ENCODE measurements at regions of chr4 and their contacts with region 1.

Region 1: DNA sequence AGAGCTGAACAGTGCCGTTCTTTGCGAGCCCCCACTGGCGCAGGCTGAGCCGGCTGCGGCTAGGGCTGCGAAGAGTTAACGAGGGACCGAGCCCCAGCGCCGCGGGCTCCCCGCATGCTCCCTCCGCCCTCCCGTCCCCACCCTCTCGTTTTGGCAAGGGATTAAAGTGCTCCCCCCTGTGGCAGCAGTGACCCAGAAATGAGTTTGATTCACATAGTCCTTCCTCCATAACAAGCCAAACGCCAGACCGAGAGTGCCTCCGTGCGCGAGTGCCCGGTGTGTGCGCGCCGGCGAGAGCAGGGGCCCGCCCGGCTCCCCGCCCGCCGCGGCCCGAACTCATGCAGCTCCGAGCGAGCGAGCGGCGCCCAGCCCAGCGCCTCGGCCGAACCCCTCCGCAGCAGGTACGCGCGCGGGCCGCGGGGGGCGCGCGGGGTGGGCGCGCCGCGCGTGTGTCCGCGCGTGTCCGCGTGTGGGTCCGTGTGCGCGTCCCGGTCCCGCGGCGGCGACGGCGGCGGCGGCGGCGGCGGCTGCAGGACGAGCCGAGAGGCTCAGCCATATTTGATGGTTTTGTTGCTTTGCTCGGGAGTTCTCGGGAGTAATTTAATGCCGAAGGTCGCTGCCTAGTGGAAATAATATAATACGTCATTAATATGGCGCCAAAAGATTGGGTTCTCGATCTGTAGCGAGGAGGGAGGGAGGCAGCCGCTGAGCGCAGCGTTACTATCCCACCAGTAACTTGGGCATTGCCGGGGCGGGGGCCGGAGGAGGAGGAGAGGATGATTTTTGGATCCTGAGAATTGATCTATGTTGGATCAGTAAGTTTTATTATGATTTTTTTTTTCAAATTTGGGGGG is at the start of gene JADE1:
- DNase-seq: no peak
- ATAC-seq: peak; percentile 69
- H3K4me3 ChIP-seq: peak within 1 kb of the TSS; percentile 99
- H3K27ac ChIP-seq: peak within 1 kb of the TSS; percentile 97
- H3K4me1 ChIP-seq: no peaks in the 10 kb centered on the region
- H3K27me3 ChIP-seq: no peaks in the 10 kb centered on the region
- CTCF ChIP-seq: peak; percentile 74 to 95 (median 76)
- EP300 ChIP-seq: no peak
- POLR2A ChIP-seq: peak; percentile 83
- RAD21 ChIP-seq: peak; percentile 80
- polyA plus RNA-seq, gene JADE1: 5.9 to 6.3 TPM

Region 2: GRCh38 chr4:127782274-127783025 is 1027.3 kb before region 1 on chr4 and contains the start of gene HSPA4L:
- CTCF ChIA-PET with region 1: no interaction called
- POLR2A ChIA-PET with region 1: no interaction called
- RAD21 ChIA-PET with region 1: no interaction called
- SMC1A ChIA-PET with region 1: no interaction called
- in situ Hi-C with region 1: no loop called
- intact Hi-C with region 1: loop called (anchors 2 kb)
- DNase-seq: peak; percentile 49
- ATAC-seq: peak; percentile 54
- H3K4me3 ChIP-seq: peak within 1 kb of the TSS; percentile 96
- H3K27ac ChIP-seq: peak within 1 kb of the TSS; percentile 90
- H3K4me1 ChIP-seq: peaks cover 11% of the 10 kb centered on the region
- H3K27me3 ChIP-seq: no peaks in the 10 kb centered on the region
- CTCF ChIP-seq: peak in 2 of 3 experiments; percentile 14 to 24; a peak in 2 of 6 replicates
- EP300 ChIP-seq: peak in 1 of 2 experiments; percentile 39; a peak in 1 of 4 replicates
- POLR2A ChIP-seq: peak; percentile 80
- RAD21 ChIP-seq: peak; percentile 3; the same call in 1 of the 2 replicates
- polyA plus RNA-seq, gene HSPA4L: 8.6 to 12.8 TPM

Region 3: GRCh38 chr4:128287871-128288688 is 521.6 kb before region 1 on chr4:
- CTCF ChIA-PET with region 1: interaction called, 4 read pairs
- POLR2A ChIA-PET with region 1: no interaction called
- RAD21 ChIA-PET with region 1: interaction called, 3 read pairs
- SMC1A ChIA-PET with region 1: no interaction called
- in situ Hi-C with region 1: loop called (anchors 10 kb)
- intact Hi-C with region 1: loop called (anchors 5 kb)
- DNase-seq: peak; percentile 97
- ATAC-seq: peak; percentile 86
- H3K4me3 ChIP-seq: peak overlapping the region; percentile 81
- H3K27ac ChIP-seq: peak overlapping the region; percentile 87
- H3K4me1 ChIP-seq: no peaks in the 10 kb centered on the region
- H3K27me3 ChIP-seq: no peaks in the 10 kb centered on the region
- CTCF ChIP-seq: peak in 1 of 3 experiments; percentile 2; a peak in 1 of 6 replicates
- EP300 ChIP-seq: 0 out of 4 replicates have a peak, but pooled peaks of 1 of the 2 experiments have one; percentile 52
- POLR2A ChIP-seq: peak; percentile 93
- RAD21 ChIP-seq: no peak

Region 4: GRCh38 chr4:128574706-128575105 is 235.0 kb before region 1 on chr4:
- CTCF ChIA-PET with region 1: interaction called, 9 read pairs
- POLR2A ChIA-PET with region 1: no interaction called
- RAD21 ChIA-PET with region 1: interaction called, 10 read pairs
- SMC1A ChIA-PET with region 1: interaction called, 7 read pairs
- in situ Hi-C with region 1: loop called (anchors 5 kb)
- intact Hi-C with region 1: loop called (anchors 1 kb)
- DNase-seq: peak; percentile 25
- ATAC-seq: peak; percentile 99
- H3K4me3 ChIP-seq: no peak overlapping the region
- H3K27ac ChIP-seq: no peak overlapping the region
- H3K4me1 ChIP-seq: no peaks in the 10 kb centered on the region
- H3K27me3 ChIP-seq: no peaks in the 10 kb centered on the region
- CTCF ChIP-seq: peak; percentile 66 to 69 (median 68)
- EP300 ChIP-seq: no peak
- POLR2A ChIP-seq: no peak
- RAD21 ChIP-seq: peak; percentile 79

Region 5: DNA sequence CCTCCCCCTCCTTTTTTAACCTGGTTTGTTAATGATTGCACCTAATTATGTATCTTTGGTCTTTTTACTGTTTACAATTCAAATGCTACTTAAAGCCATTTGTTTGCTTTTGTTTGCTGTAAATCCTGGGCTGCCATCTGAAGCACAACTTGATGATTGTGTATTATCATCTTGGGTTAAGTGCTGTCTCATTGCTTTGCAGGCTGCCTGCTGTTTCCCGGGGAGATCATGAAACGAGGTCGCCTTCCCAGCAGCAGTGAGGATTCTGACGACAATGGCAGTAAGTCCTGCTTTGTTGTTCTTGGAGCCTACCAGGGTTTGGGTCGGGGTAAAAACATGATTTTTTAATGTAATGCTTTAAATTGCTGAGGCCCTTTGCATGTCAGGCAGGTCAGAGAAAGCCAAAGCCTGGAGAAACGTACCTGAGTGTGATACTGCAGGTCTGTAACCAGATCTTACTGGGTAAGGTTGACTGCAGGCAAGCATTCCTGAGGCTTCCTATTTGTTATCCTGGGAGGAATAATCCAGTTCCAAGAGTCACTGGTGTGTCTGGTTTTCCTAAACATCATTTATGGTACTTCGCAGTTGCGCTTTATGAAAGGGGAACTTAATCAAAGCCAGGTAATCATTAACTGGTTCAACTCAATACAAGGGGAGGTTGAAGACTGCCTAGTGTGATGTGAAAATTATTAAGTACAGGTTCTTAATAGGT is 22.0 kb after region 1 on chr4:
- CTCF ChIA-PET with region 1: interaction called, 37 read pairs
- POLR2A ChIA-PET with region 1: interaction called, 70 read pairs
- RAD21 ChIA-PET with region 1: interaction called, 111 read pairs
- SMC1A ChIA-PET with region 1: interaction called, 76 read pairs
- in situ Hi-C with region 1: no loop called
- intact Hi-C with region 1: loop called (anchors 2 kb)
- DNase-seq: no peak
- ATAC-seq: peak; percentile 82
- H3K4me3 ChIP-seq: no peak overlapping the region
- H3K27ac ChIP-seq: peak overlapping the region; percentile 70
- H3K4me1 ChIP-seq: peaks cover 36% of the 10 kb centered on the region
- H3K27me3 ChIP-seq: no peaks in the 10 kb centered on the region
- CTCF ChIP-seq: no peak
- EP300 ChIP-seq: 0 out of 4 replicates have a peak, but pooled peaks of 1 of the 2 experiments have one; percentile 20
- POLR2A ChIP-seq: no peak
- RAD21 ChIP-seq: no peak

Region 6: GRCh38 chr4:128863312-128864075 is 53.8 kb after region 1 on chr4:
- CTCF ChIA-PET with region 1: interaction called, 33 read pairs
- POLR2A ChIA-PET with region 1: interaction called, 18 read pairs
- RAD21 ChIA-PET with region 1: interaction called, 35 read pairs
- SMC1A ChIA-PET with region 1: interaction called, 33 read pairs
- in situ Hi-C with region 1: no loop called
- intact Hi-C with region 1: loop called (anchors 1 kb)
- DNase-seq: no peak
- ATAC-seq: peak; percentile 73
- H3K4me3 ChIP-seq: no peak overlapping the region; the same call in 1 of the 2 replicates
- H3K27ac ChIP-seq: peak overlapping the region; percentile 84
- H3K4me1 ChIP-seq: peaks cover 36% of the 10 kb centered on the region
- H3K27me3 ChIP-seq: no peaks in the 10 kb centered on the region
- CTCF ChIP-seq: peak; percentile 73 to 83 (median 81)
- EP300 ChIP-seq: no peak
- POLR2A ChIP-seq: no peak
- RAD21 ChIP-seq: peak; percentile 75